Activated CD8-positive, alpha-beta T cell treated with anti-CD3 and anti-CD28 coated beads for 36 hours (primary cell): ENCODE measurements at regions of chr5 and their contacts with region 1.

Region 1: DNA sequence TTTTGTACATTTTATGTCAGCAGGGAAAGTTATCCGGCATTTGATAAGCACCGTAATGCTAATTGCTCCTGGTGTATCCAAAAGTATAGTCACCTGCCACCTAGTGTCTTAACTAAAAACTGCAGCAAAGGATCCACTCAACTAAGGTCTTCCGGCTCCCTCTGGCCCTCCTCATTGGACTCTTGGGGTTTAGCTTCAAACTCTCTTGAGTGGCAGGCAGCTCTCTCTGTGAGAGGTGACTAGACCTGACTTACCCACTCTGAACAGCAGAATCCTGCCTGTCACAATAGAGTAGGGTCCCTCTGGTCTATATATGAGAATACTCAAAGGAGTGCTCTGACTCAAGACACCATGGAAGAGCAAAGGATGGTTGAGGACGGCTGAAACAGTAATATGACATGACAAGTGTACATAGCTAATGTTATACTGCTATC is 60.3 kb upstream of the CAST start:
- DNase-seq: peak; percentile 69
- ATAC-seq: peak; percentile 77
- H3K4me3 Mint-ChIP-seq: no peak overlapping the region
- H3K27ac Mint-ChIP-seq: no peak overlapping the region
- H3K4me1 Mint-ChIP-seq: peaks cover 13% of the 10 kb centered on the region
- H3K27me3 Mint-ChIP-seq: peaks cover 7% of the 10 kb centered on the region
- CTCF ChIP-seq: peak; percentile 81

Region 2: GRCh38 chr5:95858661-95859326 is 743.0 kb before region 1 on chr5:
- CTCF ChIA-PET with region 1: interaction called, 7 read pairs
- POLR2A ChIA-PET with region 1: no interaction called
- intact Hi-C with region 1: loop called (anchors 5 kb)
- DNase-seq: peak; percentile 97
- ATAC-seq: peak; percentile 97
- H3K4me3 Mint-ChIP-seq: peak overlapping the region; percentile 31
- H3K27ac Mint-ChIP-seq: peak overlapping the region; percentile 66
- H3K4me1 Mint-ChIP-seq: peaks cover 45% of the 10 kb centered on the region
- H3K27me3 Mint-ChIP-seq: no peaks in the 10 kb centered on the region
- CTCF ChIP-seq: peak; percentile 92

Region 3: DNA sequence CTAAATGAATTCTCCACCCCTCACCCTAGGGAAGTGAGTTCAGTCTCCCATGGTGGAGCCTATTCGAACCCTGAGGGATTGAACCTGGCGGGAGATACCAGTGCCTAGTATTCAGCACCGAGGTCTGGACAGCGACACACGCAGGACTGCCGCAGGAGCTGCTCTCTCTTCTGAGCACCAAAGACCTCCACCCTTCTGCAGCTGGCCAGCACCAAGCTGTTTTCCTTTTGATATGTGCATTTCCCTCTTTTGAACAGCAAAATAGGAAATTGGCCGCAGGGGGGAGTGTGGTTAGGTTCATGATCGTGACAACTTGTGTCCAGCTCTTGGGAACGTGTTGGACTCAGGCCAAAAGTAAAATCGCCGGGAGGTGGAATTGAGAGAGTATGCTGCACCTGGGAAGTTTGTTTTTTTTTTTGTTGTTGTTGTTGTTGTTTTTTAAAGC is 167.6 kb before region 1 on chr5:
- CTCF ChIA-PET with region 1: interaction called, 19 read pairs
- POLR2A ChIA-PET with region 1: no interaction called
- intact Hi-C with region 1: loop called (anchors 2 kb)
- DNase-seq: peak; percentile 75
- ATAC-seq: peak; percentile 82
- H3K4me3 Mint-ChIP-seq: no peak overlapping the region
- H3K27ac Mint-ChIP-seq: no peak overlapping the region
- H3K4me1 Mint-ChIP-seq: peaks cover 13% of the 10 kb centered on the region
- H3K27me3 Mint-ChIP-seq: peaks cover 57% of the 10 kb centered on the region
- CTCF ChIP-seq: no peak

Region 4: DNA sequence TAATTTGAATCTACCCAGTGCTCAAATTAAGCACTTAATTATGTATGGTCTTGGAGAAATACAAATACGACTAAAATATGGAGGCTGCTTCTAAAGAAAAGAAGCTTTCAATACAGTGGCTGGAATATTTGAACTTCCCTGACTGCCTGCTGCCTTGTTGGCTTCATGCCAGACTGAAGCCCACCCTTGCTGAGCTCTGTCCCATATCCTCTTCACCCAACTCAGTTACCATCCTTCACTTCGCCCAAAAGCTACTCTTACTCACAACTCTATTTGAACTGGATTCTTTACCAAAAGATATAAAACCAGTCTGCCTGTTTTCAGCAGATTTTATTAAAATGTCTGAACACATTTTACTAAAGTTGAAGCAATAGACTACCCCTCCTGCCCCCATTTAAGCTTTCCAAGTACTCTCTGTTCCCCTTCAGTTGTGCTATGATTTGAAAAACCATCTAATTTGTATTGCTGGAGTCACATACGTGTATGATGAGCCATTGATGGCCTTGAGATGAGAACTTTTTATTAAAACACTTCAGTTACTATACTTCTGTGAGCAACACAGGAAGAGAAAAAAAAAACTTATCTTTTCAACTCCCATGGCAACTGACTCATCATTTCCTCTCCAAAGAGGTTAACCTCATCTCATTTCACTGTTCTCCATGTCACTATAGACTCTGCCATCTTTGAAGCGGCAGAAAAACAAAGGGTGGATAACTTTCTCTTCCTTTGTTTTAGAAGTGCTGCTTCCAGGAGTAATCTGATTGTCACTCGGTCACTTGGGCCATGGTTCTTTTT is 64.6 kb before region 1 on chr5:
- CTCF ChIA-PET with region 1: interaction called, 10 read pairs
- POLR2A ChIA-PET with region 1: no interaction called
- intact Hi-C with region 1: loop called (anchors 5 kb)
- DNase-seq: peak; percentile 25
- ATAC-seq: peak; percentile 80
- H3K4me3 Mint-ChIP-seq: peak overlapping the region; percentile 35
- H3K27ac Mint-ChIP-seq: peak overlapping the region; percentile 96
- H3K4me1 Mint-ChIP-seq: peaks cover 42% of the 10 kb centered on the region
- H3K27me3 Mint-ChIP-seq: no peaks in the 10 kb centered on the region
- CTCF ChIP-seq: no peak

Region 5: GRCh38 chr5:96619946-96620345 is 18.1 kb after region 1 on chr5:
- CTCF ChIA-PET with region 1: interaction called, 37 read pairs
- POLR2A ChIA-PET with region 1: no interaction called
- intact Hi-C with region 1: no loop called
- DNase-seq: no peak
- ATAC-seq: no peak
- H3K4me3 Mint-ChIP-seq: no peak overlapping the region
- H3K27ac Mint-ChIP-seq: no peak overlapping the region
- H3K4me1 Mint-ChIP-seq: no peaks in the 10 kb centered on the region
- H3K27me3 Mint-ChIP-seq: no peaks in the 10 kb centered on the region
- CTCF ChIP-seq: no peak

Region 6: GRCh38 chr5:96752341-96753016 is 150.7 kb after region 1 on chr5:
- CTCF ChIA-PET with region 1: no interaction called
- POLR2A ChIA-PET with region 1: no interaction called
- intact Hi-C with region 1: no loop called
- DNase-seq: peak; percentile 44
- ATAC-seq: no peak
- H3K4me3 Mint-ChIP-seq: no peak overlapping the region
- H3K27ac Mint-ChIP-seq: no peak overlapping the region
- H3K4me1 Mint-ChIP-seq: peaks cover 13% of the 10 kb centered on the region
- H3K27me3 Mint-ChIP-seq: no peaks in the 10 kb centered on the region
- CTCF ChIP-seq: peak; percentile 88